CD8-positive, alpha-beta memory T cell (primary cell): ENCODE measurements at regions of chr15 and their contacts with region 1.

Region 1: DNA sequence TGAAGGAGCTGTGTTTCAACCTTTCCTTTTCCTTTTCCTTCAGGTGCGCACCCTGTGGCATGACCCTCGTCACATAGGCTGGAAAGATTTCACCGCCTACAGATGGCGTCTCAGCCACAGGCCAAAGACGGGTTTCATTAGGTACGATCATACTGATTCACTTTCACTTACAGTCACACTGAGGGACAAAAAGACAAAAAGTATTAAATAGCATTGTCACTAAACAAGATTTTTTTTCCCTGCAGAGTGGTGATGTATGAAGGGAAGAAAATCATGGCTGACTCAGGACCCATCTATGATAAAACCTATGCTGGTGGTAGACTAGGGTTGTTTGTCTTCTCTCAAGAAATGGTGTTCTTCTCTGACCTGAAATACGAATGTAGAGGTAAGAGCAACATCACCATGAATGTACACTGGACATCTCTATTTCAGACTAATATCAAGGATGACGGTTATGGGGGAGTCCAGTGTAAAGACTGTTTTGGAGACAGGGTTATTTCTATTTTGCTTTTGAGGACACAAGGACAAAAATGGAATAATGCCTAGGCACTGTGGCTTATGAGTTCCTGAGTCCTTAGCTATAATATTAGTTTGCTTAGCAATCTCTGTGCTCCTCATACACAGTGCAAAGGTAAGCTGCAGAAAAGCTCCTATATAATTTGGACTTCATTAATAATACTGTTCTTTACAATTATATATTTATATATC is 13.3 kb downstream of the THBS1 start:
- DNase-seq: peak in 4 of 5 donors; percentile 18 to 65 (median 32)
- H3K4me3 ChIP-seq: no peak overlapping the region
- H3K4me3 Mint-ChIP-seq: peak overlapping the region in 5 of 7 donors; percentile 19 to 70 (median 56)
- H3K27ac ChIP-seq: no peak overlapping the region
- H3K27ac Mint-ChIP-seq: peak overlapping the region in 7 of 8 donors; percentile 65 to 92 (median 86)
- H3K4me1 ChIP-seq: no peaks in the 10 kb centered on the region
- H3K4me1 Mint-ChIP-seq: peaks cover 7 to 8% (median 7%) of the 10 kb centered on the region in 3 donors
- H3K27me3 ChIP-seq: no peaks in the 10 kb centered on the region
- H3K27me3 Mint-ChIP-seq: no peaks in the 10 kb centered on the region

Region 2: GRCh38 chr15:39666677-39667076 is 72.5 kb after region 1 on chr15:
- CTCF ChIA-PET with region 1: no interaction called
- POLR2A ChIA-PET with region 1: no interaction called
- DNase-seq: no peak
- H3K4me3 ChIP-seq: no peak overlapping the region
- H3K4me3 Mint-ChIP-seq: no peak overlapping the region
- H3K27ac ChIP-seq: no peak overlapping the region
- H3K27ac Mint-ChIP-seq: peak overlapping the region in 1 of 8 donors; percentile 62
- H3K4me1 ChIP-seq: no peaks in the 10 kb centered on the region
- H3K4me1 Mint-ChIP-seq: peaks cover 21 to 33% (median 30%) of the 10 kb centered on the region in 3 donors
- H3K27me3 ChIP-seq: no peaks in the 10 kb centered on the region
- H3K27me3 Mint-ChIP-seq: no peaks in the 10 kb centered on the region

Region 3: DNA sequence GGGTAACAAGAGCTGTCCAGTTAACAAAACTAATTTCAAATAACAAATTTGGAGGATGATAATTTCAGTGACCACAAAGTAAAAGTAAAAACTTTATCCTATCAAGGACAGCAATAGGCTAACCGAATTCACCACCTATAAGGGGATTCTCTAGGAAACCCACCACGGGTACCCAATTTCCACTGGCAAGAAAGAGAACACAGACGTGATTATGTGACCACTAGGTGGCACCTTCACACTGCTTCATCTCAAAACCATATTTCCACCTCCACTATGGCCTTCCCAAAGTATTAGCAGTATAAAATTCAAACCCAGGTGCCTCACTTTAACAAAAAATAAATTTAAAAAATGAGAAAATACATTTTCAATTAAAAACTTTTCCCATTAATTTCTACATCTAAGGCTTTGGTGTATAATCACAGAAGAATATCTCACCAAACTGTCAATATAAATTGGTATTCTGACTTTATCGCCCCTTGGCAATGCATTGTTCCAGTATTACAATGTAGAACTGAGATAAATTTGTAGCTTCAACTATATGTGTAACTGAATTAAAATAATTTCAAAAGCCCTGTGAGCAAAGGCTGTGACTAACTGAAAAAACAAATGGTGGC is 91.9 kb after region 1 on chr15:
- CTCF ChIA-PET with region 1: interaction called, 15 read pairs
- POLR2A ChIA-PET with region 1: no interaction called
- DNase-seq: peak in 3 of 5 donors; percentile 5 to 26 (median 25)
- H3K4me3 ChIP-seq: no peak overlapping the region
- H3K4me3 Mint-ChIP-seq: no peak overlapping the region
- H3K27ac ChIP-seq: no peak overlapping the region
- H3K27ac Mint-ChIP-seq: peak overlapping the region in 3 of 8 donors; percentile 24 to 58 (median 34)
- H3K4me1 ChIP-seq: no peaks in the 10 kb centered on the region
- H3K4me1 Mint-ChIP-seq: peaks cover 9 to 22% (median 17%) of the 10 kb centered on the region in 3 donors
- H3K27me3 ChIP-seq: no peaks in the 10 kb centered on the region
- H3K27me3 Mint-ChIP-seq: no peaks in the 10 kb centered on the region

Region 4: GRCh38 chr15:39756806-39757522 is 162.8 kb after region 1 on chr15:
- CTCF ChIA-PET with region 1: interaction called, 116 read pairs
- POLR2A ChIA-PET with region 1: interaction called, 5 read pairs
- DNase-seq: peak in 3 of 5 donors; percentile 6 to 42 (median 32)
- H3K4me3 ChIP-seq: no peak overlapping the region
- H3K4me3 Mint-ChIP-seq: no peak overlapping the region
- H3K27ac ChIP-seq: no peak overlapping the region
- H3K27ac Mint-ChIP-seq: no peak overlapping the region
- H3K4me1 ChIP-seq: no peaks in the 10 kb centered on the region
- H3K4me1 Mint-ChIP-seq: peaks cover 0 to 11% (median 0%) of the 10 kb centered on the region in 3 donors
- H3K27me3 ChIP-seq: no peaks in the 10 kb centered on the region
- H3K27me3 Mint-ChIP-seq: peaks cover 0 to 3% of the 10 kb centered on the region in 2 donors